ENCODE measurements at regions of chr7 and their contacts with region 1.

Region 1: GRCh38 chr7:111098011-111098925 is 7.3 kb downstream of the LRRN3 start:
- DNase-seq: peak; percentile 58
- ATAC-seq: peak; percentile 70
- H3K4me3 ChIP-seq: no peak overlapping the region
- H3K27ac ChIP-seq: no peak overlapping the region
- H3K4me1 ChIP-seq: no peaks in the 10 kb centered on the region
- H3K27me3 ChIP-seq: no peaks in the 10 kb centered on the region
- CTCF ChIP-seq: peak; percentile 65
- POLR2A ChIP-seq: no peak
- RAD21 ChIP-seq: peak; percentile 79

Region 2: DNA sequence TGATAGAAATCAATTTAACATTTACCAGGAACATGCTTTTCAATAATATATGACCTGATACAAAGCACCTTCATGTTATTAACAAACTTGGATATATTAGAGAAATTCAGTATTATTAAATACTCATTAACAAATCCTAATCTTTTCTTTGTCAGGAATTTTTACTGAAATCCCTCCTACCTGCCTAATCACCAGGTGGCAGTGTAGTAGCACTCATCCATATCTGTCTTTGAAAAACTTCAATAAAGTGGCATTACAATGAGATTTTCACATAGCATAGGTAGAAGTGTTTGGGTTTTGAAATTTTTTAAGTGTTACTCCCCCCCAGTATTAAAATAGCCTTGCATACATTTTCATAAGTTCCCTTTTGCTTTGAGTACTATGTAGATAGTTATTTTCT is 1253.9 kb before region 1 on chr7:
- CTCF ChIA-PET with region 1: no interaction called
- POLR2A ChIA-PET with region 1: no interaction called
- dilution Hi-C with region 1: no loop called
- in situ Hi-C with region 1: no loop called
- intact Hi-C with region 1: loop called (anchors 1 kb)
- DNase-seq: peak; percentile 14
- ATAC-seq: no peak
- H3K4me3 ChIP-seq: no peak overlapping the region
- H3K27ac ChIP-seq: no peak overlapping the region
- H3K4me1 ChIP-seq: no peaks in the 10 kb centered on the region
- H3K27me3 ChIP-seq: no peaks in the 10 kb centered on the region
- CTCF ChIP-seq: peak; percentile 54
- POLR2A ChIP-seq: no peak
- RAD21 ChIP-seq: peak; percentile 65

Region 3: DNA sequence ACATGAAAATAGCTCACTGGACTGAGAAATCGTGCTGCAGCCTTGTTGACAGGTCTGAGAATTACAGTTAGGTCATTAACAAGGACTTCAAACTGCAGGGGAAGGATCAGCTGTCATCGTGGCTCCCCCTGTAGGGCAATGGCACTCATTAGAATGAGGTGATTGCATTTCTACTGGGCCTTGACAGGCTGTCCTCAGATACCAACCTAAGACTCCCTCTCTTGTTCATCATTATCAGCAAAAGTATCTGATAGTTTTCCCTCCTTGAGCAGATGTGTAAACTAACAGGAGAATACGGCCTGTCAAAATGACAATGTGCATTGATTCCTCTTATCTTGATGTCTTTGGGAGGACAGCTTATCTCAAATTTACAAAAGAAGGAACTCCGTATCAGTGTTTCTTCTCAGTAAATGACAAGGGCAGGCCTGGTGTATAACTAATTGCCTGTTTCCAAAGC is 655.9 kb before region 1 on chr7:
- CTCF ChIA-PET with region 1: no interaction called
- POLR2A ChIA-PET with region 1: no interaction called
- dilution Hi-C with region 1: no loop called
- in situ Hi-C with region 1: no loop called
- intact Hi-C with region 1: loop called (anchors 10 kb)
- DNase-seq: peak; percentile 37
- ATAC-seq: peak; percentile 79
- H3K4me3 ChIP-seq: no peak overlapping the region
- H3K27ac ChIP-seq: no peak overlapping the region
- H3K4me1 ChIP-seq: no peaks in the 10 kb centered on the region
- H3K27me3 ChIP-seq: no peaks in the 10 kb centered on the region
- CTCF ChIP-seq: peak; percentile 55
- POLR2A ChIP-seq: no peak
- RAD21 ChIP-seq: peak; percentile 75

Region 4: GRCh38 chr7:110534241-110534931 is 563.9 kb before region 1 on chr7:
- CTCF ChIA-PET with region 1: no interaction called
- POLR2A ChIA-PET with region 1: no interaction called
- dilution Hi-C with region 1: no loop called
- in situ Hi-C with region 1: no loop called
- intact Hi-C with region 1: loop called (anchors 10 kb)
- DNase-seq: peak; percentile 71
- ATAC-seq: peak; percentile 85
- H3K4me3 ChIP-seq: no peak overlapping the region
- H3K27ac ChIP-seq: peak overlapping the region; percentile 94
- H3K4me1 ChIP-seq: peaks cover 11% of the 10 kb centered on the region
- H3K27me3 ChIP-seq: no peaks in the 10 kb centered on the region
- CTCF ChIP-seq: peak; percentile 16; the same call in 1 of the 2 replicates
- POLR2A ChIP-seq: no peak
- RAD21 ChIP-seq: no peak

Region 5: GRCh38 chr7:111735661-111736551 is 637.6 kb after region 1 on chr7:
- CTCF ChIA-PET with region 1: no interaction called
- POLR2A ChIA-PET with region 1: no interaction called
- dilution Hi-C with region 1: no loop called
- in situ Hi-C with region 1: loop called (anchors 10 kb)
- intact Hi-C with region 1: no loop called
- DNase-seq: peak; percentile 77
- ATAC-seq: peak; percentile 93
- H3K4me3 ChIP-seq: no peak overlapping the region
- H3K27ac ChIP-seq: no peak overlapping the region
- H3K4me1 ChIP-seq: 0 out of 2 replicates have a peak, but pooled peaks cover 2% of the 10 kb centered on the region
- H3K27me3 ChIP-seq: no peaks in the 10 kb centered on the region
- CTCF ChIP-seq: peak; percentile 85
- POLR2A ChIP-seq: no peak
- RAD21 ChIP-seq: peak; percentile 90